GM10248 (cell line): ENCODE measurements at regions of chr13 and their contacts with region 1.

Region 1: DNA sequence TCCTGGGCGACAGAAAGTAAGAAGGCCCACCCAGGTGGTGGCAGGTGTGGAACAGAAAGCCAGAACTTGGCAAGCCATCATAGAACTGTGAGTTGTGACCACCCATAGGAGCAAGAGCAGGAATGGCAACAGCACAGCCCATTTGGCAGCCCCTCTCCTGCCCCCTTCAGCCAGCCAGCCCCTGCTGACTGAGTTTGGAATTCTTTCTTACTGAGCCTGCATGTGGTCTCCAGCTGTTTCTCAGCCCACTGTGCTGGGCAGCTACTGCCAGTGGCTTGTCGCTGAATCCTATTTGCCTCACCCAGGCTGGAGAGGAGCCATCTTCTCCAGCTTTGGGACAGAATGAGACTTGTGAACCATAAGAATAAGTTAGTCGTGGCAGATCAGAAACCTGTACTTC is 28.3 kb downstream of the CNMD start:
- DNase-seq: no peak
- CTCF ChIP-seq: no peak

Region 2: DNA sequence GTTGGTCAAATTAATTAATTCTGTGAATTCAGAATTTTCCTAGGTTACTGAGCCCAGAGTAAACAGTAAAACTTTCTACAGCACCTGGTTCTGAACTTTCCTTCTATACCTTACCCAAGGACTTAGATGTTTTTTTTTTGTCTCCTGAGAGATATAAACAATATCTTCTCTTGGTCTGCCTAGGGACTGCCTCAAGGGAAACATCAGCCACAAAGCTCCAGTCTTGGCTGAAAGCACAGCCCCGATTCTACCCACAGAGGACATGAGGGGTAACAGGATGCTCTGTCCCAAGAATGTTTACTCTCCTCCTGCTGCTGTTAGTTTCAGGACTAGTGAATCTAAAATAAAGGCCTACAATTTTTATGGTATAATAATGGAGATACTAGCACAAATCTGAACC is 14.0 kb after region 1 on chr13:
- CTCF ChIA-PET with region 1: interaction called, 10 read pairs
- POLR2A ChIA-PET with region 1: no interaction called
- DNase-seq: no peak
- CTCF ChIP-seq: no peak

Region 3: DNA sequence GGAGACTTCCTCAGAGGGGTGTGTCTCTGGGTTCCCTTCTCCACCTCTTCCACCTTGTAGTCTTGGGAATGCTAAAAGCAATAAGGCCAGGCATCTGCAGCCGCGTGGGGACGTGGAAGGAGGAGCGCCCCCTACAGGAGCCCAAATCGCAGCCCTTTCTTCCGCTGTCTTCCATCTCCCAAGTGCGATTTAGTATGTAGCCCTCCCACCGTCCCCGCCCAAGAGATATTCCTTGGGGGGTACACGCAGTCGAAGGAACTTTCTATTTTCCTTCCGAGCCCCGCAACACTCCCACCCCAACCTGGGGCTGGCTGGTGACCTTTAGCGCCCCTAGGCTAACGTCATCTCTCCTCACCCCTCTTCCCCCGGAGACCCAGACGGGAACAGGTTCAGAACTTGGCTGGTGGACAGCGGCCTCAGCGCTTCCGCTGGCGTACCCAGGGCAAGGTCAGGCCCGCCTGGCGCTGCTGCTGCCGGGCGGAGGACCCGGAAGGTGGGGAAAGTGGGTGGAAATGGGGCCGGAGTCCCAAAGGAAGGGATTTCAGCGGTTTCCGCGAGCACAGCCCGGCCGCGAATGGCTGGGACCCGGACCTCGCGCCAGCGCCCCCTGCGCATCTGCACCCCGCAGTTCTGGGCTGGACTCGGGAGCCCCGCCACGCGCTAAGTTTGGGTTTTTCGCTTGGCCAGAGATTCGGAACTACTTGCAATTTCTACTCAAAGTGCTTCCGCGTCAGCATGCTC is 139.3 kb after region 1 on chr13:
- CTCF ChIA-PET with region 1: no interaction called
- POLR2A ChIA-PET with region 1: no interaction called
- DNase-seq: peak; percentile 75
- CTCF ChIP-seq: no peak